Activated CD8-positive, alpha-beta memory T cell treated with anti-CD3 and anti-CD28 coated beads, Interleukin-2, amount 10 ng/mL, durations not matched to agents 7 days and 5 days (primary cell): ENCODE measurements at regions of chr11 and their contacts with region 1.

Region 1: GRCh38 chr11:18650859-18651557 is 16.9 kb upstream of the SPTY2D1 start:
- DNase-seq: peak; percentile 67
- ATAC-seq: peak; percentile 83
- H3K4me3 Mint-ChIP-seq: no peak overlapping the region
- H3K27ac Mint-ChIP-seq: peak overlapping the region; percentile 65
- H3K4me1 Mint-ChIP-seq: peaks cover 12% of the 10 kb centered on the region
- H3K27me3 Mint-ChIP-seq: no peaks in the 10 kb centered on the region

Region 2: DNA sequence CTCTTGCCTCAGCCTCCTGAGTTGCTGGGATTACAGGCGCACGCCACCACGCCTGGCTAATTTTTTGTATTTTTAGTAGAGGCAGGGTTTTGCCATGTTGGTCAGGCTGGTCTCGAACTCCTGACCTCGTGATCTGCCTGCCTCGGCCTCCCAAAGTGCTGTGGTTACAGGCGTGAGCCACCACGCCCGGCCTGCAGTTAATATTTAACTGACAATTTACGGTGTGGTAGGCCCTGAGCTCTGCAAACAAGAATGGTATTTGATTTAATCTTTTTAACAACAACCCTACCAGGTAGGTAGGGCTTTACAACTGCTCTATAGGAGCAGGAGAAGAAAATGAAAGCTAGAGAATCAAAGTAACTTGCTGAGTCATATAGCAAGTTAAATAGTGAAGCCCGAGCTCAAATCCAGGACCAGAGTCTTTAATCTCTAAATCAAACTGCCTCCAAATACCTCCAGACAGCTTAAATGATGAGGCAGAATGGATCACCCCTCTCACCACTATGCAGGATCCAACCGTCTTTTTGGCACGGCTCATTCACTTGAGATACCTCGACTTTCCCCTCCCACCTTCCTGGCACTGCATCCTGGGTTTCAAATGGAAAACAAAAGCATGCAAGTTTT is 71.9 kb before region 1 on chr11:
- CTCF ChIA-PET with region 1: interaction called, 19 read pairs
- DNase-seq: peak; percentile 52
- ATAC-seq: peak; percentile 93
- H3K4me3 Mint-ChIP-seq: peak overlapping the region; percentile 64
- H3K27ac Mint-ChIP-seq: peak overlapping the region; percentile 83
- H3K4me1 Mint-ChIP-seq: peaks cover 36% of the 10 kb centered on the region
- H3K27me3 Mint-ChIP-seq: no peaks in the 10 kb centered on the region

Region 3: GRCh38 chr11:18615628-18616392 is 35.2 kb before region 1 on chr11:
- CTCF ChIA-PET with region 1: interaction called, 10 read pairs
- DNase-seq: no peak
- ATAC-seq: peak; percentile 79
- H3K4me3 Mint-ChIP-seq: peak overlapping the region; percentile 8
- H3K27ac Mint-ChIP-seq: peak overlapping the region; percentile 83
- H3K4me1 Mint-ChIP-seq: peaks cover 46% of the 10 kb centered on the region
- H3K27me3 Mint-ChIP-seq: no peaks in the 10 kb centered on the region

Region 4: GRCh38 chr11:18634140-18635032 is 16.6 kb before region 1 on chr11 and contains the start of gene SPTY2D1:
- CTCF ChIA-PET with region 1: interaction called, 16 read pairs
- DNase-seq: peak; percentile 100
- ATAC-seq: peak; percentile 91
- H3K4me3 Mint-ChIP-seq: peak within 1 kb of the TSS; percentile 97
- H3K27ac Mint-ChIP-seq: peak within 1 kb of the TSS; percentile 99
- H3K4me1 Mint-ChIP-seq: peaks cover 23% of the 10 kb centered on the region
- H3K27me3 Mint-ChIP-seq: no peaks in the 10 kb centered on the region
- total RNA-seq, gene SPTY2D1: 23.8 to 34.7 TPM